Activated CD4-positive, alpha-beta T cell treated with anti-CD3 and anti-CD28 coated beads for 36 hours (primary cell): ENCODE measurements at regions of chr2 and their contacts with region 1.

Region 1: GRCh38 chr2:118348380-118349034 is 260.2 kb downstream of the INSIG2 start:
- DNase-seq: no peak
- ATAC-seq: no peak
- H3K4me3 Mint-ChIP-seq: no peak overlapping the region
- H3K27ac Mint-ChIP-seq: no peak overlapping the region
- H3K4me1 Mint-ChIP-seq: no peaks in the 10 kb centered on the region
- H3K27me3 Mint-ChIP-seq: peaks cover 13% of the 10 kb centered on the region

Region 2: DNA sequence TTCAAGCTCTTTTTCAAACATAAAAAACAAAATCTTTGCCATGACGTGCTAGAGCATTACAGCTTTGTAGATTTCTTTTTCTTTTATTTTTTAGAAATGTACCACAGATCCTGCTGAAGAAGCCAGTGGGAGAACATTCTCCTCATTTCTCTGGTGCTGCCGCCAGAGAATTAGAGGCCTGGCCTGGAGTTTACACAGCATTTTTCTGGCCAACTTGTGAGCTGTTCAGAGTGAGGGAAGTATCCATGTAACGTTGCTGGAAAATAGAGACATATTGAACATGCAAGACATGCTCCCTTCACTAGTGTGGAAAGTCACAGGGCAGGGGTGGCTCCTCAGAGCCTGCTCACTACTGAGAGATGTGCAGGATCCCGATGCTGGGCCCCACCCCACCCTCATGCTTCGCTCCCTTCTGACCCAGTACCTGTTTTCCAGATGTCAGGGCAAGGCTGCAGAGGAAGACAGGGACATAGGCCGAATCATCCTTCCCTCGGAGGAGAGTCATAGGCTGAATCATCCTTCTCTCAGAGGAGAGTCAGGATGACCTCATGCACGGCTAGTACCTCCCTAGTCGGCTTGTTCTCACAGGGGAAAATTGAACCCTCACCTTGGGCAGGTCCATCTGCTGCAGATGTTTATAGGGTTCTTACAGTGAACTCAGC is 38.3 kb after region 1 on chr2:
- CTCF ChIA-PET with region 1: no interaction called
- POLR2A ChIA-PET with region 1: interaction called, 10 read pairs
- intact Hi-C with region 1: no loop called
- DNase-seq: no peak
- ATAC-seq: no peak
- H3K4me3 Mint-ChIP-seq: no peak overlapping the region
- H3K27ac Mint-ChIP-seq: no peak overlapping the region
- H3K4me1 Mint-ChIP-seq: no peaks in the 10 kb centered on the region
- H3K27me3 Mint-ChIP-seq: peaks cover 5% of the 10 kb centered on the region